Posterior vena cava (tissue), 2 donors: ENCODE measurements at regions of chr2 and their contacts with region 1.

Region 1: DNA sequence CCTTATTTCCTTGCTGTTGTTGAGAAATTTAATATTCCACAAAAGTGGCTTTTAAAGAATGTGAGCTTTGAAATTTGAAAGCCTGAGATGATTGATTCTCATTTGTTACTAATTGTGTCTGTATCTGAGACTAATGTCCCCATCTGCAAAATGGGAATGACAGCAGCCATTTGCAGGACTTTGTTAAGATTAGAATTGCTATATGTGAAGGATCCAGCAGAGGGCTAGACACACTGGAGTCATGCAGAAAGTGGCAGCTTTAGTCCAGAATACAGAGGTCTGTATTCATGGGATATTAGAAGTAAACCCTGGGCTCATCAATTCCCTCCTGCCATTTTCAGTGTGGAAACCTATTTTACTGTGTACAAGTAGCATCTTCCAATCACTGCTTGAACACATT is 296.5 kb upstream of the GYPC start:
- DNase-seq: no peak

Region 2: GRCh38 chr2:126325202-126325601 is 34.3 kb before region 1 on chr2:
- intact Hi-C with region 1: no loop called
- DNase-seq: no peak

Region 3: GRCh38 chr2:126784028-126784427 is 424.5 kb after region 1 on chr2:
- intact Hi-C with region 1: loop called in 1 of 2 experiments (anchors 10 kb)
- DNase-seq: peak; percentile 13